Panc1 (cell line): ENCODE measurements at regions of chr19 and their contacts with region 1.

Region 1: GRCh38 chr19:2494444-2495129 is 18.7 kb downstream of the GADD45B start:
- DNase-seq: no peak
- ATAC-seq: peak; percentile 80
- H3K4me3 ChIP-seq: peak overlapping the region; percentile 58 to 76
- H3K27ac ChIP-seq: peak overlapping the region; percentile 85
- H3K4me1 ChIP-seq: peaks cover 33% of the 10 kb centered on the region
- H3K27me3 ChIP-seq: no peaks in the 10 kb centered on the region
- CTCF ChIP-seq: no peak

Region 2: GRCh38 chr19:2537584-2538433 is 43.2 kb after region 1 on chr19:
- CTCF ChIA-PET with region 1: no interaction called
- POLR2A ChIA-PET with region 1: no interaction called
- in situ Hi-C with region 1: no loop called
- intact Hi-C with region 1: loop called (anchors 2 kb)
- DNase-seq: no peak
- ATAC-seq: no peak
- H3K4me3 ChIP-seq: no peak overlapping the region
- H3K27ac ChIP-seq: peak overlapping the region; percentile 60; the same call in 1 of the 2 replicates
- H3K4me1 ChIP-seq: peaks cover 57% of the 10 kb centered on the region
- H3K27me3 ChIP-seq: no peaks in the 10 kb centered on the region
- CTCF ChIP-seq: no peak